Dorsolateral prefrontal cortex (tissue), 120 donors: ENCODE measurements at regions of chr12 and their contacts with region 1.

Region 1: GRCh38 chr12:122895705-122896636 is at the start of gene VPS37B:
- DNase-seq: peak; percentile 59 to 84 (median 77)
- H3K4me3 ChIP-seq: peak within 1 kb of the TSS; percentile 61 to 90 (median 78)
- H3K27ac ChIP-seq: peak within 1 kb of the TSS; percentile 20 to 93 (median 81)
- H3K27me3 ChIP-seq: no peaks in the 10 kb centered on the region
- CTCF ChIP-seq: peak in 13 of 56 donors; percentile 8 to 38 (median 15)
- total RNA-seq, gene VPS37B: 15.8 to 35.3 (median 22.0) TPM

Region 2: DNA sequence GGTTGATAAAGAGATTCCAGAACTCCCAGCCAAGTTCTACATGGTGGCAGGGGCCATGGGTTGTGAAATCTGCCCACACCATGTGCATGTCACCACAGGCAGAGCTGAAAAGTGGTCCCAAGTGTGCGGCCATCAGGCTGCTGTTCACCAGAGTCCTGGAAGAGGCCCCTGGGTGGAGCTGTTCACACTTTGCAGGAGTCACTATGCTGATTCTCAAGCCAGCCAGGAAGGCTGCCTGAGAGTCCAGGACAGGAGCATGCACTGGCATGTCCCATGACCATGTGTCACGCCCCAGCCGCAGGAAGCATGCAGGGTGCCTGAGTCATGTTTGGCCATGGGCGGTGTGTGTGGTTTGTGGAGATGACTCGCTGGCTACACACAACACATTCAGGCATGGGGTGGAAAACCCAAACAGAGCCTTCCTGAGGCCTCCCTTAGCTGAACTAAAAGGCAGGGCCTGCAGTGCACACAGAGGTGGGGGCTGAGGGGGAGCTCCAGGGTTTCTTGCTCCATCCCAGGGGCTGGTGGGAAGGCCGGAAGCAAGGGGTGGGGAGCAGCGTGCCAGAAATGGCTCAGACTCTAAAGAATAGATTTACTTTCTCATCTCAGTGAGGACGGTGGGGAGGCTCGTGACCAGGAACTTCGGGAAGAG is 50.8 kb after region 1 on chr12:
- intact Hi-C with region 1: loop called (anchors 5 to 10 kb)
- DNase-seq: peak in 5 of 10 donors; percentile 60 to 88 (median 65)
- H3K4me3 ChIP-seq: no peak overlapping the region
- H3K27ac ChIP-seq: peak overlapping the region in 53 of 59 donors; percentile 1 to 85 (median 56)
- H3K27me3 ChIP-seq: no peaks in the 10 kb centered on the region
- CTCF ChIP-seq: peak in 15 of 56 donors; percentile 7 to 36 (median 20)